ENCODE measurements at regions of chr9 and their contacts with region 1.

Region 1: DNA sequence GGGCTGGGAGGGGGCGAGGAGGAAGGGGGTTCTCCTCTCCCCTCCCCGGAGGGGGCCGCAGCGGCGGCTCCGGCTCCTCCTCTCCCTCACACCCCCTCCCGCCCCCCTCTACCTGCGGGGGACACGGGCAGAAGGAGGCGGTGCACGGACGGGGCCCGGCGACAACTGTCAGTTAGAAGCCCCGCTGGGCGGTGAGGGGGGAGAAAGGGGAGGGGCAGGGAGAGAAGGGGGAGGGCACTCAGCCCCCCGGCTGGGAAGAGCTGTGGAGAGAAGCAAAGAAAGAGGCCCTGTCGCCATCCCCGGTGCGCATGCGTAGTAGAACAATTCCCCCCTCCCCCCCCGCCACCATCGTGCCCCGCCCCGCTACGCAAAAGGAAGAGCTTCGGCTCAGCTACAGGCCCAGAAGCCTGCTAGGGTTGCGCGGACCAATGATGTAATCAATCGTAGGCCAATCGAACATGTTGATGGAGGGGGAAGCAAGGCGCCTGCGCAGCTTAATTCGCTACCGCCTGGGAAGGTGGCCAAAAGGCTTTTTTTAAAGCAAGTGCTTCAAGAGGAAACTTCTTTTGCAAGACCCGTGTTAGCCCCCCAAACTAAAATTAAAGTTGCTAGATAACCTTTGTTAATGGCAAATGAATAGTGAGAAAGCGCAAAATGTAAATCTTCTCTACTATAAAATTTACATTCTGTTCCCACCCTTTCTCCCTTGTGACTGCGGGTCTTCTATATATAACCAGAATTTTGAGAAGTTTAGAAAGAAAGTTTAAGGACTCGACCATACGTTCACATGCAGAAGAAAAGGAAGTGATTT is 7.0 kb downstream of the RANBP6 start:
- DNase-seq: peak; percentile 98

Region 2: GRCh38 chr9:5892456-5893133 is 115.8 kb before region 1 on chr9:
- intact Hi-C with region 1: no loop called
- DNase-seq: no peak

Region 3: DNA sequence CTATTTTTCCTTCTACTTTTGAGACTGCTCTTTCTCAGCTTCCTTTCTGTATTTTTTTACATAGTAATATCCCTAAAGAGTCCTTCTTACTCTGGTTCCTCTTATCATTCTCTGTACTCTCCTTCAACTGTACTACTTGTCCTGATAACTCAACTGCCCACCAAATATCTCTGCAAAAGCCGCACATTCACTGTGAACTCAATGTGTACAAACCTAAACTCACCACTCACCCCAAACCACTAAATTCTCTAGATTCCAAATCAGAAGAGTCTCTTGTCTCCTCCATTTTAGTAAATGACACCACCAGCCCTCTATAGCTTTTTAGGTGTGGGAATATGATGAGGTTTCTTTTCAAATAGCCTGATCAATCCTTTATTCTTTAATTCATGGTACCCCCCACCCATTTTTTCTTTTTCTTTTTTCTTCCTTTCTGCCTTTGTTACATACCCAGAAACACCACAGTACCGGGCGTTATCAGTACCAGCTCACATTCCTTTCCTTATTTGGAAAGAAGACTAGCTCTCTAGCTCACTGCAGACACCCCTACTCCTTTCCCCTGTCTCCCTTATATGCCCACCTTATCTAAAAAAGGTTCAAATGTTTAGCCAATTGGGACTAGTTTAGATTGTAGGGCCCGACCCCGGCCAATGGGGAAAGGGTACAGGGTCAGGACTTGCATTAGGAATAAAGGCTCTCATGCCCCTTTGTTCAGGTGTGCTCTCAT is 70.2 kb after region 1 on chr9:
- intact Hi-C with region 1: loop called (anchors 2 kb)
- DNase-seq: no peak

Measured in cardiac septum (tissue), 1 donor.